Activated CD4-positive, alpha-beta T cell treated with anti-CD3 and anti-CD28 coated beads for 36 hours (primary cell): ENCODE measurements at regions of chr20 and their contacts with region 1.

Region 1: DNA sequence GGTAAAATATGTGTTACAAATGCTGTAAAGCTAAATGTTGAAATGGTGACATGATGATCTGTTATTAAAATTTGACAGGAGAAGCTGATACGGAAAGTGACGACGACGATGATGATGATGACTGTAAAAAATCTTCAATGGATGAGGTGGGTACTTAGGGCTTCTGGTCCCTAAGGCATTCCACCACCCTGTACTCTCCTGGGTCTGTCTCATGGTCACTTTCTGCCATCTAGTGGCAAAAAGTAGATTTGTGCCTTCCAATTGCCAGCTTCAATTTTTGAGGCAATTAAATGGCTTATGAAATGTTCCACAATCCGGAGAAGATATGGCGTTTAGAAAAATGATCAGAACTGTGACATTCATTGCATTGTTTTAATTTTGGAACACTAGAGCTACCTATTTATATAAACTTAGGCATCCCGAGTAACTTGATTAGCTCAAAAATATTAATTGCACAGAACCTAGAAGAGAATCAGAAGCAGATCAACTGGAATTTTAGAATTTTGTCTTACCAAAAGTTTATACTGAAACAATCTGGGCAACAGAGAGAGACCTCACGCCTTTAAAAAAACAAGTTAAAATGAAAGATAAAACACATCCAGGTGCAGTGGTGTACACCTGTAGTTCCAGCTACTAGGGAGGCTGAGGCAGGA is 346.5 kb upstream of the PLCB4 start:
- DNase-seq: peak; percentile 19
- ATAC-seq: peak; percentile 64
- H3K4me3 Mint-ChIP-seq: no peak overlapping the region
- H3K27ac Mint-ChIP-seq: no peak overlapping the region
- H3K4me1 Mint-ChIP-seq: no peaks in the 10 kb centered on the region
- H3K27me3 Mint-ChIP-seq: no peaks in the 10 kb centered on the region

Region 2: DNA sequence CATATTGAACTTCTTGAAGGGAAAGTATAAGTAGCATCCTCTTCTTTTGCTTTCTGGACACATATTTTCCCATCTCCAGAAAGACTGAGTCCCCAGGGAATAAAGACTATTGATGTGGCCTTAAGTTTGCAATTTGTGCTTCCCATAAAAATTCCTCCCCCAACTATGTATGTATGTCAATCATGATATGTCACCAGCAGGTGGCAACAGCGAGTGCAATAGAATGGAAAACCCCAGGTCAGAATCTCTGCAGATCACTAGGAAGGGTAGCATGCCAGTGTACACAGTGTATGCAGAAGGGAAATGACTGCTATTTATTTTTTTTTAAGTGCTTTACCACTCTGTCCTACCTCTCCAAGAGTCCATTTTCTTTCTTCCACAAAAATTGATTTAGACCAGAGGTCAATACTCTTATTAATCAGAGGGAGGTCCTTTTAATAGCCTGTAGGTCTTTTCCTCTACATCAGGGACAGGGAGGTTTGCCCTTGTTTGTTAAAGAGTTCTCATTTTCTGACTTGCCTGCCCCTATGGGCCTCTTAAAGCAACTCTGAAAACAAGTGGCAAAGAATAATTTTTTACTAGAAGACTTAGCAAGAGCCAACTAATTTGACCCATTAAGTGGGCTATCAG is 1893.5 kb before region 1 on chr20:
- CTCF ChIA-PET with region 1: no interaction called
- POLR2A ChIA-PET with region 1: no interaction called
- intact Hi-C with region 1: loop called in 1 of 2 experiments (anchors 5 kb)
- DNase-seq: peak; percentile 67
- ATAC-seq: peak; percentile 55
- H3K4me3 Mint-ChIP-seq: no peak overlapping the region
- H3K27ac Mint-ChIP-seq: no peak overlapping the region
- H3K4me1 Mint-ChIP-seq: no peaks in the 10 kb centered on the region
- H3K27me3 Mint-ChIP-seq: no peaks in the 10 kb centered on the region

Region 3: DNA sequence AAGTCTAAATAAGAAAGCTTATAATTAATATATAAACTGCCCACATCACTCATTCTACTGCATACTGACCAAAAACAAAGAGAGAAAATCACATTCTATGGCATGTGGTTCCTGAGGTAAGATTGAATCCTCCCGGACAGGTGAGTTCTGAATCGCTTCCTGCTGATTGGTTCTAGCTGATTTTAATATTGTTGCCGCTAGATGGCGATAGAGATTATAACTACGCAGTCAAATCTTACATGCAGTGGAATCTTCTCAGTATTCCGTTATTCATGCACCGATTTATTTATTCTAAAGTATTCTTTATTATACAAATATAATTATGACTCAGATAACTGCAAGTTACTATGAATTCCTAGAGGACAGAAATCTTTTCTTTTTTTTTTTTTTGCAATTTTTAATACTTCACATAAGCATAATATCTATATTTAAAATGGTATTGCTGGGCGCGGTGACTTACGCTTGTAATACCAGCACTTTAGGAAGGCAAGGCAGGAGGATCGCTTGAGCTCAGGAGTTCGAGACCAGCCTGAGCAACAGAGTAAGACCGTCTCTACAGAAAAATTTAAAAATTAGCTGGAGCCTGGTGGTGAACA is 678.6 kb before region 1 on chr20:
- CTCF ChIA-PET with region 1: interaction called, 51 read pairs
- POLR2A ChIA-PET with region 1: no interaction called
- intact Hi-C with region 1: loop called (anchors 1 kb)
- DNase-seq: peak; percentile 18
- ATAC-seq: peak; percentile 72
- H3K4me3 Mint-ChIP-seq: no peak overlapping the region
- H3K27ac Mint-ChIP-seq: no peak overlapping the region
- H3K4me1 Mint-ChIP-seq: peaks cover 1% of the 10 kb centered on the region
- H3K27me3 Mint-ChIP-seq: peaks cover 9% of the 10 kb centered on the region

Region 4: GRCh38 chr20:8131598-8132483 is 590.6 kb before region 1 on chr20 and contains the start of gene PLCB1:
- CTCF ChIA-PET with region 1: interaction called, 12 read pairs
- POLR2A ChIA-PET with region 1: no interaction called
- intact Hi-C with region 1: loop called (anchors 1 kb)
- DNase-seq: peak; percentile 89
- ATAC-seq: peak; percentile 90
- H3K4me3 Mint-ChIP-seq: peak within 1 kb of the TSS; percentile 68
- H3K27ac Mint-ChIP-seq: no peak within 1 kb of the TSS
- H3K4me1 Mint-ChIP-seq: peaks cover 17% of the 10 kb centered on the region
- H3K27me3 Mint-ChIP-seq: peaks cover 30% of the 10 kb centered on the region
- total RNA-seq, gene PLCB1: 1.4 to 1.5 TPM

Region 5: GRCh38 chr20:8389381-8390036 is 332.9 kb before region 1 on chr20:
- CTCF ChIA-PET with region 1: interaction called, 22 read pairs
- POLR2A ChIA-PET with region 1: no interaction called
- intact Hi-C with region 1: loop called (anchors 5 kb)
- DNase-seq: no peak
- ATAC-seq: no peak
- H3K4me3 Mint-ChIP-seq: no peak overlapping the region
- H3K27ac Mint-ChIP-seq: no peak overlapping the region
- H3K4me1 Mint-ChIP-seq: no peaks in the 10 kb centered on the region
- H3K27me3 Mint-ChIP-seq: peaks cover 2% of the 10 kb centered on the region

Region 6: GRCh38 chr20:8735674-8736073 is 13.3 kb after region 1 on chr20:
- CTCF ChIA-PET with region 1: interaction called, 13 read pairs
- POLR2A ChIA-PET with region 1: no interaction called
- intact Hi-C with region 1: no loop called
- DNase-seq: no peak
- ATAC-seq: no peak
- H3K4me3 Mint-ChIP-seq: no peak overlapping the region
- H3K27ac Mint-ChIP-seq: no peak overlapping the region
- H3K4me1 Mint-ChIP-seq: peaks cover 2% of the 10 kb centered on the region
- H3K27me3 Mint-ChIP-seq: peaks cover 2% of the 10 kb centered on the region

Region 7: DNA sequence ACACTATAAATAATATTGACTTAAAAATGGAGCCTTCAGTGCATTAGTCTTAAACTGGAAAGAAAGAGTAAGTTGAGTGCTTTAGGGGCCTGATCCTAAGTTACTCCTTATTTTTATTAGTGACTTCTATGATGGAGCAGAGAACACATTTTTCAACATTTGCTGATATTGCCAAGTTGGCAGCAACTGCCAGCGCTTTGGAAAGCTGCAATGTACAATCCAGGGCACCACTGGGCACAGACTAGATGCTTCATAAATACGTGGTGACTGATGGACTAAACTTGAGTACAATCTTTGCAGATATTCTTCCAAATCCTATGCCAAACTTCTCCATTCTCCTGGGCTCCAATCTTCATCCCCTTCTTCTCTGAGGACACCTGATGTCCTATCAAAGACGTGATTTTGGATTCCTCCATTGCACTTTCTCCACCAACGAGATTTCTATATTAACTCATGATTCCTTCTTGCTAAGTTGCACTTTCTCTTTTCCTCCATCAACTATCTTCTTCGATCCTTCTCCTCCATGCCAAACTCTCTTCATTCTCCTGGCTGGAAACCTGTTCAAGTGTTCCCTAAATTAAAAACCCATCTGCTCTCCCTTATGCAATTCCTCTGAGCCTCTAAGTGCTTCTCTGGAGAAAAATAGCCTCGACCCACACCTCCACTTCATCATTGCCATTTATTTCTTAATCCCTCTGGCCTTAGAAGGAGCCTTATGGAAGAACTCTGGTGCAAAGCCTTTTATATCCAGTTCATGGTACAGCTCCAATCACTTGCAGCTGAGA is 1145.0 kb after region 1 on chr20:
- CTCF ChIA-PET with region 1: no interaction called
- POLR2A ChIA-PET with region 1: no interaction called
- intact Hi-C with region 1: no loop called
- DNase-seq: no peak
- ATAC-seq: no peak
- H3K4me3 Mint-ChIP-seq: no peak overlapping the region
- H3K27ac Mint-ChIP-seq: no peak overlapping the region
- H3K4me1 Mint-ChIP-seq: no peaks in the 10 kb centered on the region
- H3K27me3 Mint-ChIP-seq: peaks cover 5% of the 10 kb centered on the region